ENCODE measurements at regions of chr2 and their contacts with region 1.

Region 1: DNA sequence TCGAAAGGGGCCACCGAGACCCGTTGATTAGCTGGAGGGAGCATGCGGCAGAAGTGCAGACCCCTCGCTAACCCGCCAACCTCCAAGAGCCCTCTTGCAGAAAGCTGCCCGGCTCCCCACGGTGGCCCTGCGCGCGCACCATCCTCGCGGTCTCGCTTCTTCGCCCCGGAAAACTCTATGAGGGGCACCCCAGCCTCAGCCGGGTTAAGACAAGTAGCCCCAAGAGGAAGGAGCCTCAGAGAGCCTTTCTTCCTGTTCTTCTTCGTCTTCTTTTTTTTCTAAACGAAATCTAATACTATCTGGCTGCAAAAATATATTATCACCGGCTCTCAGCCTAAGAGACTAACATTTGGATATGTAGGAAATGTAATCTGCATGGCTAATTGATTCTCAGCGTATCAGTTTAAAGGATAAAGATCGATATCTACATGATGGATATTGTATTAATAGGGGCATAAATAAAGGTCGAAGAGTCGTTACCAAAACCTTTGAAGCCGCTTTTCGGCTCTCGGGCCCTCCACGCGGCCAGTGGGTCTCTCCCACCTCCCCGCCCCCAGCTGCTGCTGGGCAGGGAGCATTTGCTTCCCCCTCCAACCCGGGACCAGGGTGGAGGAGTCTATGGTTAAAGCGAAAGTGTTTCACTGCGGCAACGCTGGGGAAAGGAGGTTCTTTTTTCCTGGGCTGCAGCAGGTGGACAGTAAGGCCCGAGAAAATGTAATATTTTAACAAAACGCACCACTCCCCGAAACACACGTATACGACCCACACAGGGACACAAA is 6.1 kb upstream of the PAX3 start:
- DNase-seq: no peak
- ATAC-seq: peak; percentile 53 to 75 (median 58)
- H3K4me3 ChIP-seq: peak overlapping the region; percentile 81
- H3K27ac ChIP-seq: peak overlapping the region; percentile 76
- H3K4me1 ChIP-seq: peaks cover 7% of the 10 kb centered on the region
- H3K27me3 ChIP-seq: peaks cover 0 to 82% (median 32%) of the 10 kb centered on the region in 3 donors
- CTCF ChIP-seq: no peak

Region 2: DNA sequence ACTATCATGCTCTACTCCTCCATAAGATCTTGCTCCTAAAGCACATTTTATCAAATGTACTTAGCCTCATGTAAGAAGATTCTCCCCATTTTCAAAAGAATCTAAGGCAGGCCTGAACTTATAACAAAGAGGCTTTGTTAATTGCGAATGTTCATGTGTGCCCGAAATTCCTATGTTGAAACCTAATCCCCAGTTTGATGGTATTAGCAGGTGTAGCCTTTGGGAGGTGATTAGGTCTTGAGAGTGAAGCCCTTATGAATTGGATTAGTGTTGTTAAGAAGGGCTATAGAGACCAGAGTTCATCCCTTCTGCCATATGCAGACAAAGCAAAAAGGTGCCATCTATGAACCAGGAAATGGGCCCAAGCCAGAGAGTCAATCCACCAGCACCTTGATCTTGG is 240.6 kb before region 1 on chr2:
- intact Hi-C with region 1: loop called in 1 of 2 experiments (anchors 5 kb)
- DNase-seq: no peak
- ATAC-seq: no peak
- H3K4me3 ChIP-seq: no peak overlapping the region
- H3K27ac ChIP-seq: no peak overlapping the region
- H3K4me1 ChIP-seq: no peaks in the 10 kb centered on the region
- H3K27me3 ChIP-seq: peaks cover 0 to 2% (median 0%) of the 10 kb centered on the region in 3 donors
- CTCF ChIP-seq: no peak

Region 3: DNA sequence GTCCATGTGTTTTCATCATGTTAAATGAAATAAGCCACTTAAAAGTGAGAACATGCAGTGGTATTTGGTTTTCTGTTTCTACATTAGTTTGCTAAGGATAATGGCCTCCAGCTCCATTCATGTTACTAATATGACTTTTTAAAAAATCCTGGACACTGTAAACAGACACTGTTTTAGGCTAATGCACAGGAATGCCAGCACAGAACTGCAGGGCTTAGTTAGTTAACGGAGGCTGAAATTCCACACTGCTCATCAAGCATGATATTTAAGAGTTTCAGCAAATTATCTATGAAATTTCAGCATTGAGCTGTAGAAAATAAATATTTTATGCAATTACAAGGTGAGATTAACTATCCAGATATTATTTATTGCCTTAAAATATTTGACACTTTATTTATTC is 36.4 kb after region 1 on chr2:
- intact Hi-C with region 1: no loop called
- DNase-seq: no peak
- ATAC-seq: no peak
- H3K4me3 ChIP-seq: no peak overlapping the region
- H3K27ac ChIP-seq: no peak overlapping the region
- H3K4me1 ChIP-seq: no peaks in the 10 kb centered on the region
- H3K27me3 ChIP-seq: no peaks in the 10 kb centered on the region
- CTCF ChIP-seq: no peak

Region 4: DNA sequence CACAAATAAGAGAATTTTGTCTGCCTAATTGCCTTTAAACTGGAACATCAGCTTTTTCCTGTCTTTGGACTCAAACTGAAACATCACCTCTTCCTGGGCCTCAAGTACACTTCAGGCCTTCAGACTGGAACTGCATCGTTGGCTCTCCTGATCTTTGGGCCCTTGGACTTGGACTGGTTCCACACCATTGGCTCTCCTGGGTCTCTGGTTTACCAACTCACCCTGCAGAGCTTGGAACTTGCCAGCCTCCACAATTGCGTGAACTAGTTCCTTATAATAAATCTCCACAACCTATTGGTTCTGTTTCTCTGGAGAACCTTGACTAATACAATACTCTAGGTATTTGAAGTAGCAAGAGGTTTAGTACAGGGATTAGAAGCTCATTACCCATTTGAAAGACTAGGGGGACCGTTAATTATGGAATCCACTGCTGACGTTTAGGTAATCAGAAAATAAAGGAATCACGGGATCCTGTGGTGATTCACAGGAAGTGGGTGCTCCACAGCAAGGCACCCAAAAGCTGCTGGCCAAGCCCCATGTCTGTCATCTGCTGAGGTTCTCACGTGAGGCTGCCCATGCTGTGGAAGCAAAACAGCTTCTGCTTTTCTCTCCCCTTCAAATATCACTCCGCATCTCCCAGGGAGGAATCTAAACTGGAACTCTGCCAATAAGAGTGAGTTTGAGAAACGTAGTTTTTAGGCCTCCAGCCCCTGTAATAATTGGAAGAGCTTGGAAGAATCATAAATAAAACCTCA is 99.4 kb after region 1 on chr2:
- intact Hi-C with region 1: no loop called
- DNase-seq: no peak
- ATAC-seq: no peak
- H3K4me3 ChIP-seq: no peak overlapping the region
- H3K27ac ChIP-seq: no peak overlapping the region
- H3K4me1 ChIP-seq: peaks cover 7% of the 10 kb centered on the region
- H3K27me3 ChIP-seq: peaks cover 0 to 2% (median 0%) of the 10 kb centered on the region in 3 donors
- CTCF ChIP-seq: no peak